SK-N-SH (cell line): ENCODE measurements at regions of chr15 and their contacts with region 1.

Region 1: GRCh38 chr15:45457641-45458433 is 64.7 kb downstream of the SLC30A4 start:
- DNase-seq: peak; percentile 74
- H3K4me3 ChIP-seq: peak overlapping the region; percentile 50 to 67
- H3K27ac ChIP-seq: peak overlapping the region; percentile 76 to 94
- H3K4me1 ChIP-seq: peaks cover 10 to 21% of the 10 kb centered on the region in 2 experiments
- H3K27me3 ChIP-seq: no peaks in the 10 kb centered on the region
- CTCF ChIP-seq: peak; percentile 78
- EP300 ChIP-seq: no peak; a peak in 1 of 4 replicates
- RAD21 ChIP-seq: peak; percentile 92

Region 2: GRCh38 chr15:45100884-45101622 is 356.8 kb before region 1 on chr15:
- CTCF ChIA-PET with region 1: no interaction called
- POLR2A ChIA-PET with region 1: no interaction called
- DNase-seq: no peak
- H3K4me3 ChIP-seq: no peak overlapping the region
- H3K27ac ChIP-seq: no peak overlapping the region
- H3K4me1 ChIP-seq: no peaks in the 10 kb centered on the region
- H3K27me3 ChIP-seq: peaks cover 9% of the 10 kb centered on the region; the same call in 1 of the 2 replicates
- CTCF ChIP-seq: no peak
- EP300 ChIP-seq: no peak
- RAD21 ChIP-seq: no peak

Region 3: DNA sequence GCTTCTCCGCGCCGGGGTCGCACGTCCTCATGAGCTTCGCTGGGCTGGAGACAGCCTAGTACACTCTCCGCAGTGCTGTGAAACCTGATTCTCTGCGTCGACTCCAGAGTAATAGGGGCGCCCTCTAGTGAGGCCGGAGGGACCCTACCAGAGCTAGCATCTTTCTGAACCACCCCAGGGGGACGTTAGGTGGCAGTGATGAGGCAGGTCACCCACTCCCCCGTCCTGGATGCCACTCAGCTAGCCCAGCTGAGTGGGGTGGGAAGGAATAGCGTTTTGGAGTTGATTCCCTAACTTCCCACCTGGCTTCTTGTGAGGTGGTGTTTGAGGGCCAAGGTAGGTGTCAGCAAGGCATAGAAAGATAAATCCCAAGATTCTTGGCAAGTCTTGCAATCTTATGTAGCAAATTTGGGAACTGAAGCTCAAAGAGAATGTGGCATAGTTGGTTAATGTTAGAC is 339.7 kb before region 1 on chr15:
- CTCF ChIA-PET with region 1: interaction called, 10 read pairs
- POLR2A ChIA-PET with region 1: no interaction called
- DNase-seq: peak; percentile 97
- H3K4me3 ChIP-seq: peak overlapping the region in 1 of 2 experiments; percentile 53; a peak in 1 of 4 replicates
- H3K27ac ChIP-seq: no peak overlapping the region
- H3K4me1 ChIP-seq: peaks cover 6 to 17% of the 10 kb centered on the region in 2 experiments; a peak in 3 of 4 replicates
- H3K27me3 ChIP-seq: peaks cover 25% of the 10 kb centered on the region
- CTCF ChIP-seq: peak; percentile 98
- EP300 ChIP-seq: no peak
- RAD21 ChIP-seq: peak; percentile 83

Region 4: GRCh38 chr15:45205192-45205591 is 252.6 kb before region 1 on chr15:
- CTCF ChIA-PET with region 1: interaction called, 48 read pairs
- POLR2A ChIA-PET with region 1: no interaction called
- DNase-seq: peak; percentile 74
- H3K4me3 ChIP-seq: no peak overlapping the region; a peak in 1 of 4 replicates
- H3K27ac ChIP-seq: no peak overlapping the region
- H3K4me1 ChIP-seq: no peaks in the 10 kb centered on the region; a peak in 1 of 4 replicates
- H3K27me3 ChIP-seq: no peaks in the 10 kb centered on the region
- CTCF ChIP-seq: peak; percentile 90
- EP300 ChIP-seq: no peak
- RAD21 ChIP-seq: peak; percentile 91

Region 5: GRCh38 chr15:45346381-45346780 is 111.5 kb before region 1 on chr15:
- CTCF ChIA-PET with region 1: no interaction called
- POLR2A ChIA-PET with region 1: no interaction called
- DNase-seq: no peak
- H3K4me3 ChIP-seq: no peak overlapping the region
- H3K27ac ChIP-seq: no peak overlapping the region
- H3K4me1 ChIP-seq: no peaks in the 10 kb centered on the region
- H3K27me3 ChIP-seq: no peaks in the 10 kb centered on the region
- CTCF ChIP-seq: no peak
- EP300 ChIP-seq: no peak
- RAD21 ChIP-seq: no peak

Region 6: GRCh38 chr15:45384700-45385099 is 73.1 kb before region 1 on chr15:
- CTCF ChIA-PET with region 1: interaction called, 16 read pairs
- POLR2A ChIA-PET with region 1: no interaction called
- DNase-seq: no peak
- H3K4me3 ChIP-seq: no peak overlapping the region
- H3K27ac ChIP-seq: no peak overlapping the region
- H3K4me1 ChIP-seq: no peaks in the 10 kb centered on the region; a peak in 1 of 4 replicates
- H3K27me3 ChIP-seq: no peaks in the 10 kb centered on the region; the same call in 1 of the 2 replicates
- CTCF ChIP-seq: no peak
- EP300 ChIP-seq: no peak
- RAD21 ChIP-seq: no peak

Region 7: DNA sequence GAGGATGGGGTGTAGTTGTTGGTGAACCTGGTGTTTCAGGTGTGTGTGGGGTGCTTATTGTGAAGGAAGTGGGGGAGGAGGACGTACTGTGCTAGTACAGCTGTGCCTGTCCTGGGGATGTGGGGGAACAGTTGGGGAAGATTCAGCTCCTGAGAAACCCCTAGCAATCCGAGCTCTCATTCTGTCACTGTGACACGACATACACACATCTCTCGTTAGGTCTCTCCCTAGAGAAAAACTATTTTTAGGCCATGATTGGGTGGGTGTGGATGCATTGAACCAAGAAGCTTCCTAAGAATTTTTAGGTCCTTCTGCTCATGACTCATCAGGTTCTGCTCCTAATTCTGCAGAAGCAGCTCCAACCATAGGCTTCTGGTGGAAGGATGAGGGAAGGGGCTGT is 10.5 kb after region 1 on chr15:
- CTCF ChIA-PET with region 1: interaction called, 22 read pairs
- POLR2A ChIA-PET with region 1: no interaction called
- DNase-seq: no peak
- H3K4me3 ChIP-seq: no peak overlapping the region
- H3K27ac ChIP-seq: no peak overlapping the region
- H3K4me1 ChIP-seq: no peaks in the 10 kb centered on the region
- H3K27me3 ChIP-seq: no peaks in the 10 kb centered on the region
- CTCF ChIP-seq: no peak
- EP300 ChIP-seq: no peak
- RAD21 ChIP-seq: no peak

Region 8: GRCh38 chr15:45587095-45587860 is 129.4 kb after region 1 on chr15 and contains the start of gene BLOC1S6:
- CTCF ChIA-PET with region 1: interaction called, 30 read pairs
- POLR2A ChIA-PET with region 1: no interaction called
- DNase-seq: peak; percentile 90
- H3K4me3 ChIP-seq: peak within 1 kb of the TSS; percentile 84 to 87
- H3K27ac ChIP-seq: peak within 1 kb of the TSS; percentile 94 to 97
- H3K4me1 ChIP-seq: peaks cover 19 to 24% of the 10 kb centered on the region in 2 experiments; a peak in 3 of 4 replicates
- H3K27me3 ChIP-seq: no peaks in the 10 kb centered on the region
- CTCF ChIP-seq: no peak
- EP300 ChIP-seq: no peak
- RAD21 ChIP-seq: no peak
- polyA plus RNA-seq, gene BLOC1S6: 11.3 and 14.1 TPM in 2 replicates

Region 9: GRCh38 chr15:45948181-45948621 is 490.4 kb after region 1 on chr15:
- CTCF ChIA-PET with region 1: no interaction called
- POLR2A ChIA-PET with region 1: no interaction called
- DNase-seq: no peak
- H3K4me3 ChIP-seq: no peak overlapping the region
- H3K27ac ChIP-seq: no peak overlapping the region
- H3K4me1 ChIP-seq: no peaks in the 10 kb centered on the region
- H3K27me3 ChIP-seq: no peaks in the 10 kb centered on the region
- CTCF ChIP-seq: no peak
- EP300 ChIP-seq: no peak
- RAD21 ChIP-seq: no peak